Mammary epithelial cell (primary cell): ENCODE measurements at regions of chr4 and their contacts with region 1.

Region 1: DNA sequence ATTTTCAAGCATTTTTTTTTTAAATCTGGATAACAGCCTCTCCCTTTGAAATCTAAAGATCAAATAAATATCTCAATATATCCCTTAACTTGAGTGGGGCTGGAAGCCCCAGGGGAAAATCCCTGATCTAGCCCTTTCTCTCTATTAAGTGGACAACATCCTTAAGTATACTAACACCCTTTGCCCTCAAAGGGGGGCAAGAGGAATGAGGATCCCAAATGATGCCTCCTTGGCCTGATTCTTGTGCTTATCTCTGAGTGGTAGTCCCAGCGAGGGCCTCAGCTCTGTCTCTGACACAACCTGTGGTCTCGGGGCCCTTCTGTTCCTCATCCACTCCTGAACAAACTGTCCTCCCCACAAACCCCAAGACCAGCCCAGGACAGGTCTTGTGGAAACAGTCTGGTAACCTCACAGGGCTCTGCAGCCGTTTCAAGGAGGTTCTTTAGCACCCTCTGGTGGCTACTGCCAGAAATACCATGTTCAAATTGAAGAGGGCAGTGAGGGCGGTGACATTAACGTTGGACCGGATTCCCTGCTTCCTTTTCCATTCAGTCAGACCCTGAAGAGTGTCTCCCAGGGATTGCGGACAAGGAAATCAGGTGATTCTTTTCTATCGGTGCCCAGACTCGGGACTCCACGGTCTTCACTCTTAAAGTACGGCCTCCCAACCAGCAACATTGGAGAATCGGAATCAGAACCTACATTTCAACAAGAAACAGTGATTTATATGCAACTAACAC is 12.9 kb downstream of the CXCL13 start:
- DNase-seq: peak; percentile 59
- H3K4me3 ChIP-seq: no peak overlapping the region
- H3K27ac ChIP-seq: no peak overlapping the region
- H3K4me1 ChIP-seq: peaks cover 10% of the 10 kb centered on the region
- H3K27me3 ChIP-seq: no peaks in the 10 kb centered on the region
- CTCF ChIP-seq: peak; percentile 75 to 84

Region 2: DNA sequence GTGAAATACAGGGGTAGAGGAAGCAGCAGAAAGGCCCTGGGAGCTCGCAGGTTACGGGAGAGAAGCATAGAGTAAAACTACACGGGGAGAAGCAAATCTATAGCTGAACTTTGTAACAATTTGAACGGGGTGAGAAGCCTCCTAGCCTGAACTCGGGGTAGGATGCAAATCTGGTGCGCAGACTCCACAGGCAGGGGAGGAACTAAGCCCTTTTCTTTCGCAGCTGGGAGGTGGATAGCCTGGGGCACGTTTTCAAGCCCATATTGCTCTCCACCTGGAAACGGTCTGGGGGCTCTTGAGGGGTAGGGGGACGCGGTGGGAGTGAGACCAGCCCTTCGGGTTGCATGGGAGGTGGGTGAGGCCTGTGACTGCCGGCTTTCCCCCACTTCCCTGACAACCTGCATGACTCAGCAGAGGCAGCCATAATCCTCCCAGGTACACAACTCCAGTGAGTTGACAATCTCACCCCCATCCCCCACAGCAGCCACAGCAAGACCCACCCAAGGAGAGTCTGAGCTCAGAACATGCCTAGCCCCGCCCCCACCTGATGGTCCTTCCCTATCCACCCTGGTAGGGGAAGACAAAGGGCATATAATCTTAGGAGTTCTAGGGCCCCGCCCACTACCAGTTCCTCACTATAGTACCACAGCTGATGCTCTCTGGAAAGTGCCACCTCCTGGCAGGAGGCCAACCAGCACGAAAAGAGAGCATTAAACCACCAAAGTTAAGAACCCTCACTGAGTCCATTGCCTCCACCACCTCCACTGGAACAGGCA is 750.5 kb before region 1 on chr4:
- CTCF ChIA-PET with region 1: no interaction called
- dilution Hi-C with region 1: no loop called
- in situ Hi-C with region 1: no loop called
- intact Hi-C with region 1: no loop called
- DNase-seq: no peak
- H3K4me3 ChIP-seq: no peak overlapping the region
- H3K27ac ChIP-seq: no peak overlapping the region
- H3K4me1 ChIP-seq: no peaks in the 10 kb centered on the region
- H3K27me3 ChIP-seq: no peaks in the 10 kb centered on the region
- CTCF ChIP-seq: no peak

Region 3: GRCh38 chr4:77075869-77076799 is 542.4 kb before region 1 on chr4 and contains the start of gene CCNI:
- CTCF ChIA-PET with region 1: no interaction called
- dilution Hi-C with region 1: no loop called
- in situ Hi-C with region 1: no loop called
- intact Hi-C with region 1: no loop called
- DNase-seq: peak; percentile 96
- H3K4me3 ChIP-seq: peak within 1 kb of the TSS; percentile 73 to 92 (median 83)
- H3K27ac ChIP-seq: peak within 1 kb of the TSS; percentile 96
- H3K4me1 ChIP-seq: peaks cover 14% of the 10 kb centered on the region
- H3K27me3 ChIP-seq: no peaks in the 10 kb centered on the region
- CTCF ChIP-seq: no peak
- total RNA-seq, gene CCNI: 177 to 250 TPM

Region 4: DNA sequence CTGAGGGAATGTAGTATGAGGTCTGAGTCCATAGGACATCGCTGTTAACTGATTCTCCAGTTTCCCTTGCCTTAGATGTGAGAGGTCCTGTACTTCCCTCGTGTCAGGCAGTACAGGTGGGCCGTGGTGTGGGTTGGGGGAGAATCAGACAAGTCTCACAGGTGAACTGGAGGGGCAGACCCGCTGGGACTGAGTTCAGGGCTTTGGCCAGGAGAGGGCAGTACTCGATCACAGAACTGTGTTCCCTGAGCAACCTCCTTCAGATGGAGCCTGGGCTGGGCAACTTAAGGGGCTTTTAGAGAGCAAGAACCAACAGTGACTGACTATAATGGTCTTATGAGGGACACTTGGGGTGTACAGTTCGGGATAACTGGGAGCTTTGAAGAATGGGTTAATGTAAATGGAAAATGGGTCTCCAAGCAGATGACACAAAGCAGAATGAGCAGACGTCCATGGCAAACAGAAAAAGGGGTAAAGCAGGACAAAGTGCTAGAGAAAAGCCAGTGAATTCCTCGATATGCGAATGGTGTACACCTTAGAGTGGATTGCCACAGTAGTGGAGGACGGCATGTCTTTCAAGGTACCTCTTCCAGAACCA is 378.0 kb before region 1 on chr4:
- CTCF ChIA-PET with region 1: no interaction called
- dilution Hi-C with region 1: no loop called
- in situ Hi-C with region 1: loop called in 1 of 2 experiments (anchors 25 kb)
- intact Hi-C with region 1: no loop called
- DNase-seq: peak; percentile 28
- H3K4me3 ChIP-seq: no peak overlapping the region
- H3K27ac ChIP-seq: no peak overlapping the region
- H3K4me1 ChIP-seq: no peaks in the 10 kb centered on the region
- H3K27me3 ChIP-seq: no peaks in the 10 kb centered on the region
- CTCF ChIP-seq: peak; percentile 91 to 93

Region 5: GRCh38 chr4:77367638-77368037 is 250.9 kb before region 1 on chr4:
- CTCF ChIA-PET with region 1: no interaction called
- dilution Hi-C with region 1: no loop called
- in situ Hi-C with region 1: no loop called
- intact Hi-C with region 1: loop called (anchors 2 kb)
- DNase-seq: no peak
- H3K4me3 ChIP-seq: no peak overlapping the region
- H3K27ac ChIP-seq: no peak overlapping the region
- H3K4me1 ChIP-seq: no peaks in the 10 kb centered on the region
- H3K27me3 ChIP-seq: peaks cover 2% of the 10 kb centered on the region
- CTCF ChIP-seq: no peak

Region 6: GRCh38 chr4:77465271-77465670 is 153.3 kb before region 1 on chr4:
- CTCF ChIA-PET with region 1: interaction called, 7 read pairs
- dilution Hi-C with region 1: no loop called
- in situ Hi-C with region 1: no loop called
- intact Hi-C with region 1: loop called (anchors 1 kb)
- DNase-seq: peak; percentile 28
- H3K4me3 ChIP-seq: no peak overlapping the region
- H3K27ac ChIP-seq: no peak overlapping the region
- H3K4me1 ChIP-seq: no peaks in the 10 kb centered on the region
- H3K27me3 ChIP-seq: no peaks in the 10 kb centered on the region
- CTCF ChIP-seq: peak; percentile 54 to 74

Region 7: GRCh38 chr4:77697860-77698590 is 79.5 kb after region 1 on chr4:
- CTCF ChIA-PET with region 1: interaction called, 21 read pairs
- dilution Hi-C with region 1: no loop called
- in situ Hi-C with region 1: no loop called
- intact Hi-C with region 1: loop called (anchors 1 kb)
- DNase-seq: peak; percentile 64
- H3K4me3 ChIP-seq: no peak overlapping the region
- H3K27ac ChIP-seq: no peak overlapping the region
- H3K4me1 ChIP-seq: peaks cover 30% of the 10 kb centered on the region
- H3K27me3 ChIP-seq: no peaks in the 10 kb centered on the region
- CTCF ChIP-seq: peak; percentile 63 to 77

Region 8: DNA sequence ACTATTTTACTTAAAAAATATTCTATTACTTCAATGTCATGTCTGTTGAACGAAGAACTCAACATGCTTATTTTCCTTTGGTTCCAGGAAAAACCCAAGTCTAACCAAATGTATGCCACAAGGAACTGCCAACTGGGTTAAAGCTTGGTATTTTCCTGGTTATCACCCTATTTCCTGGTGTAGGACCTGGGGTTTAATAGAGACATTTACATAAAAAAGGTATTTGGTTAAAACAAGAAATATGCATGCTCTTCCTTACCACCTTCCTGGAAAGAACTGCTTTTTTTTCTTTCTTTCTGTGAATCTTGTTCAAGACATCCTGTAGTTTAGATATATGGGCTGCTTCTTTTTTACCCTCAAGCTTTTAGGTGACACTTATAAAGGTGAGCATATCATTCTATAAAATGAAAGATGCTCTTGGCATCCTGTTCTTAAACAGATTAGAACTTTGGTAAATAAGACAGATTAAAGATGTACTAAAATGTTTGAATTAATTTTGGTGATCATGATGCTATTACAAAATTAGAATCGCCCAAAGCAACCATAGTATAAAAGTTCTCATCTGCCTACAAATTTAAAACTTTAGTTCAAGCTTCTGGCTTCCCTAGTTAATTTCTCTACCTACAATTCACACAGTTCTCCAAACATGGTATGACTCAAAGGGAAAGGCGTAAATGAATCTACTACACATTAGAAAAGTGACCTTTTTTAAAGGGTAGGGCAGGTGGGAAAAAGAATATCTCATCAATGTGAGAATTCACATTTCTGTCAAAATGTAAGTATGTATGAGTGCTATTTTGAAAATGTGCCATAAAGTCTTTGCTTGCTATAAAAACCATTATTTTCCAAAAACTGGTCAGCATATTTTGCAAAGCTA is 97.1 kb after region 1 on chr4:
- CTCF ChIA-PET with region 1: no interaction called
- dilution Hi-C with region 1: no loop called
- in situ Hi-C with region 1: no loop called
- intact Hi-C with region 1: no loop called
- DNase-seq: no peak
- H3K4me3 ChIP-seq: no peak overlapping the region
- H3K27ac ChIP-seq: no peak overlapping the region
- H3K4me1 ChIP-seq: no peaks in the 10 kb centered on the region
- H3K27me3 ChIP-seq: no peaks in the 10 kb centered on the region
- CTCF ChIP-seq: no peak

Region 9: GRCh38 chr4:77852892-77853495 is 234.4 kb after region 1 on chr4:
- CTCF ChIA-PET with region 1: no interaction called
- dilution Hi-C with region 1: no loop called
- in situ Hi-C with region 1: no loop called
- intact Hi-C with region 1: loop called (anchors 5 kb)
- DNase-seq: no peak
- H3K4me3 ChIP-seq: no peak overlapping the region
- H3K27ac ChIP-seq: no peak overlapping the region
- H3K4me1 ChIP-seq: no peaks in the 10 kb centered on the region
- H3K27me3 ChIP-seq: no peaks in the 10 kb centered on the region
- CTCF ChIP-seq: no peak